Heart left ventricle (tissue), 16 donors: ENCODE measurements at regions of chr11 and their contacts with region 1.

Region 1: GRCh38 chr11:44833877-44834452 is 107.2 kb downstream of the TSPAN18 start:
- DNase-seq: no peak
- ATAC-seq: no peak
- H3K4me3 ChIP-seq: no peak overlapping the region
- H3K27ac ChIP-seq: peak overlapping the region in 10 of 12 donors; percentile 3 to 80 (median 39)
- H3K4me1 ChIP-seq: peaks cover 0 to 47% (median 25%) of the 10 kb centered on the region in 12 donors
- H3K27me3 ChIP-seq: no peaks in the 10 kb centered on the region
- CTCF ChIP-seq: no peak
- POLR2A ChIP-seq: no peak

Region 2: GRCh38 chr11:44848203-44848962 is 14.4 kb after region 1 on chr11:
- intact Hi-C with region 1: loop called in 1 of 10 experiments (anchors 2 kb)
- DNase-seq: no peak
- ATAC-seq: no peak
- H3K4me3 ChIP-seq: no peak overlapping the region
- H3K27ac ChIP-seq: no peak overlapping the region
- H3K4me1 ChIP-seq: peaks cover 4 to 44% (median 17%) of the 10 kb centered on the region in 12 donors
- H3K27me3 ChIP-seq: no peaks in the 10 kb centered on the region
- CTCF ChIP-seq: no peak
- POLR2A ChIP-seq: no peak